Activated CD4-positive, alpha-beta T cell treated with anti-CD3 and anti-CD28 coated beads for 36 hours (primary cell): ENCODE measurements at regions of chr9 and their contacts with region 1.

Region 1: GRCh38 chr9:137295238-137295811 is 6.7 kb downstream of the NRARP start:
- DNase-seq: peak; percentile 72
- ATAC-seq: peak; percentile 79
- H3K4me3 Mint-ChIP-seq: no peak overlapping the region
- H3K27ac Mint-ChIP-seq: no peak overlapping the region
- H3K4me1 Mint-ChIP-seq: peaks cover 3% of the 10 kb centered on the region
- H3K27me3 Mint-ChIP-seq: peaks cover 28% of the 10 kb centered on the region

Region 2: DNA sequence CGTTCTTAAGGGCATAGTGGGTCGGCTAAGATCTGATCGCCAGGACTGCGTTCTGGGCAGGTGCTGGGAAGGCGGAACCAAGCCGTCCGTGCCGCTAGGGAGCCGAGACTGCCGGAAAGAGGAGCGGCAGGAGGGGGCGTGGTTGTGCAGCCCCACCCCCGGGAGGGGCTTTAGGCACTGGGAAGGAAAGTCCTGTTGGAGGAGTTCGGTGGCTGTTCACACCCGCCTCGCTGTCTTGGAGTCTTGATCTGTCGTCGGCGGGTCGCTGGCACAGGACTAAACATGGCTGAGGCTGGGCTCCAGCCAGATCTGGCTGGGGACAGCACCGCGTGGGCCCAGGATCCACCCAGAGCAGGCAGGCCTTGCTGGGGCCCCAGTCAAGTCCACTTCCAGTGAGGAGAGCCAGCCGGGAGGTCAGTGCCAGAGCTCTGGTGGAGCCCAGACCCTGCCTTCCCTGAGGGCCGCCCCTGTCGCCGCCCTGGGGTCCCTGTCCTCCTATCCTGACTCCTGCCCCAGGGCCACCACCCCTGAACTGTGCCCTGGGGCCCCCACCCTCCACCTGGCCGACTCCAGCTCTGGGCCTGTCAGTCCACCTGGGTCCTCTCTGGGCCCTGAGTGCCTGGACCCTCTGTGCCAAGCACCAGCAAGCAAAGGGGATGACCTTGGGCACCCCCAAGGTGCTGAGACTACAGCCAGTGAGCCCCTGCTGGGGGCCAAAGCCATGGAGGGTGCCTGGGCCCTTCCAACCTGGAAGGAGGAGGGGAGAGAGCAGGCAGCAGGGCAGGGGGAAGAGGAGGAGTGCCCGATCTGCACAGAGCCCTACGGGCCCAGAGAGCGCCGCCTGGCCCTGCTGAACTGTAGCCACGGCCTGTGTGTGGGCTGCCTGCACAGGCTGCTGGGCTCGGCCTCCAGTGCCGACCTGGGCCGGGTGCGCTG is 77.8 kb before region 1 on chr9:
- CTCF ChIA-PET with region 1: no interaction called
- POLR2A ChIA-PET with region 1: no interaction called
- intact Hi-C with region 1: no loop called
- DNase-seq: no peak
- ATAC-seq: no peak
- H3K4me3 Mint-ChIP-seq: no peak overlapping the region
- H3K27ac Mint-ChIP-seq: no peak overlapping the region
- H3K4me1 Mint-ChIP-seq: no peaks in the 10 kb centered on the region
- H3K27me3 Mint-ChIP-seq: no peaks in the 10 kb centered on the region

Region 3: GRCh38 chr9:137406876-137407589 is 111.7 kb after region 1 on chr9:
- CTCF ChIA-PET with region 1: interaction called, 3 read pairs
- POLR2A ChIA-PET with region 1: no interaction called
- intact Hi-C with region 1: loop called (anchors 1 to 2 kb)
- DNase-seq: peak; percentile 84
- ATAC-seq: peak; percentile 94
- H3K4me3 Mint-ChIP-seq: no peak overlapping the region
- H3K27ac Mint-ChIP-seq: no peak overlapping the region
- H3K4me1 Mint-ChIP-seq: peaks cover 2% of the 10 kb centered on the region
- H3K27me3 Mint-ChIP-seq: no peaks in the 10 kb centered on the region

Region 4: DNA sequence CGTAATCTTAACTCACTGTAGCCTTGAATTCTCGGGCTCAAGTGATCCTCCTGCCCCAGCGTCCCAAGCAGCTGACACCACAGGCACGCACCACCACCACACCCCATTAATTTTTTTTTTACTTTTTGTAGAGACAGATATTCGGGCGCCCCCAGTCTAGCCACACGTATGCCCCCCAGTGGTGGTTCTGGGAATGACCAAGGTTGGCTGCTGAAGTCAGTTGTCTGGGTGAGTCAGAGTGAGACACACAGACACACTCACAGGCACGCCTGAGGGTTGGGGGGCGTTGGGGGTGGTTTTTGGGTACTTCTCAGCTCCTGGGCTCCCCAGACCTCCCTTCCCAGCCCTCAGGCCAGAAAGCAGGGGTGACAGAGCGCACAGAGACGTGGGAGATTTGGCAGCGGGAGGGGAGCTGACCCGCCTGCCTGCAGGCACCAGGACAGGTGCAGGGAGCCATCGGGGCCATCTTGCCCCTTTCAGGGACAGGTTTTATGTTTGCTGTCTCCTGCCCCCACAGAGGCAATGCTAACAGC is 150.0 kb after region 1 on chr9:
- CTCF ChIA-PET with region 1: no interaction called
- POLR2A ChIA-PET with region 1: no interaction called
- intact Hi-C with region 1: loop called (anchors 1 to 10 kb)
- DNase-seq: peak; percentile 91
- ATAC-seq: peak; percentile 91
- H3K4me3 Mint-ChIP-seq: no peak overlapping the region
- H3K27ac Mint-ChIP-seq: no peak overlapping the region
- H3K4me1 Mint-ChIP-seq: peaks cover 16% of the 10 kb centered on the region
- H3K27me3 Mint-ChIP-seq: peaks cover 10% of the 10 kb centered on the region

Region 5: GRCh38 chr9:137521405-137521985 is 226.2 kb after region 1 on chr9:
- CTCF ChIA-PET with region 1: no interaction called
- POLR2A ChIA-PET with region 1: no interaction called
- intact Hi-C with region 1: loop called (anchors 2 to 10 kb)
- DNase-seq: no peak
- ATAC-seq: no peak
- H3K4me3 Mint-ChIP-seq: no peak overlapping the region
- H3K27ac Mint-ChIP-seq: no peak overlapping the region
- H3K4me1 Mint-ChIP-seq: no peaks in the 10 kb centered on the region
- H3K27me3 Mint-ChIP-seq: no peaks in the 10 kb centered on the region